ENCODE measurements at regions of chr9 and their contacts with region 1.

Region 1: DNA sequence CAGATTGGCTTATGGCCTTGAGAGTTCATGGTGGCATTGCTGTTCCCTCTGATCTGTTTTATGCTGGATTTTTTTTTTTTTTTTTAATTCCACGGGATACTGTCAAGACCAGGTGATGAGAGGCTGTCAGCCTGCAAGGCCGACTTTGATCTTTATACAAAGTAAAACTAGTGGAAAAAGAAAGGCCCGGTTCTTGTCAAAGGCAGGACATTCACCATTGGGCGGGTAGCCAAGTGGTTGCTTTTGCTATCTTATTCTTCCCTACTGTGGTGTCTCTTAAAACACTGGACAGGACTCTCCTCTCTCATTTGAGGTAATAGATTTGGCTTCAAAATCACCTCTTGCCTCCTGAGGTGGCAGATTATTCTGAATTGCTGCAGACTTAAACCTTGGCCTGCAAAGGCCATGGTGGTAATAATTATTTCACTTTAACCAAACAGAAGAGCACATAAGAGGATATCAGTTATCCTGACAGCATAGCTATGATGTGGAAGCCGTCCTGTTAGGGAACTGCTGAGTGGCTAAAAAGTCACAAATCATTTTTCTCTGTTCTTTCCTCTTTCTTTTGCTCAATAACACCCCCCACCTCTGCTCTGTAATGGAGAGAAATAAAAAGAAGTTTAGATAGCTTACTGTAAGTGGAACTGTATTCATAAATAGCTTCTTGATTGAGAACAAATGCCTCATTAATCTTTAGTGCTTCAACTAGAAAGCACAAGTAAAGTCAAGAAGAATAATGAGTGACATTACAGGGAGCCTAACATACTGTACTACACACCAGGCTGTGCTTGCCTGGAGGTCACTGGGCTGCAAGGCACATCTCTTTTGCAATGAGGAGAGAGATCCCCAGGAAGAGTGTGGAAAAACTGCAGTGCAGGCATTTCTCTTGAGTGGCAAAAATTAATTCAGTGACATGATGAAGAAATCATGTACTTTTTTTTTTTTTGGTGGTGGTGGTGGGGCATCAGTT is 275.6 kb downstream of the KDM4C start:
- DNase-seq: no peak
- ATAC-seq: peak; percentile 48 to 53

Region 2: DNA sequence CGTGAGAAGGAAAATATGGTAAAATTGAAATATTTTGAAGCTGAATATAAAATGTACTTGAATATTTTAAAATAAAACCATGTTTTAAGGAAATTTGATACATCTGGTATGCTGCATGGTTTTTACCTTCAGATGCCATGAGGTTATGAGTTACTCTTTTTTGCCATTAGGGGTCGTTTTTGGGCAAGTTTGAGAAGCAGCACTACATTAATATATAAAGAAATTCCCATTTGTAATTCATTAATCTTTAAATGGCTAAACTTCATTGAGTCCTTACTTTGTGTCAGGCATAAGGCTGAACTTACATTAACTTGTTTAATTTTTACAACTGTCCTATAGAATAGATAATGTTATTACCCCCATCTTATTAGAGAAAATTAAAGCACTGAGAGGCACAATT is 123.3 kb before region 1 on chr9:
- intact Hi-C with region 1: loop called in 1 of 2 experiments (anchors 10 kb)
- DNase-seq: no peak
- ATAC-seq: no peak